Tibial artery (tissue), 4 donors: ENCODE measurements at regions of chr1 and their contacts with region 1.

Region 1: DNA sequence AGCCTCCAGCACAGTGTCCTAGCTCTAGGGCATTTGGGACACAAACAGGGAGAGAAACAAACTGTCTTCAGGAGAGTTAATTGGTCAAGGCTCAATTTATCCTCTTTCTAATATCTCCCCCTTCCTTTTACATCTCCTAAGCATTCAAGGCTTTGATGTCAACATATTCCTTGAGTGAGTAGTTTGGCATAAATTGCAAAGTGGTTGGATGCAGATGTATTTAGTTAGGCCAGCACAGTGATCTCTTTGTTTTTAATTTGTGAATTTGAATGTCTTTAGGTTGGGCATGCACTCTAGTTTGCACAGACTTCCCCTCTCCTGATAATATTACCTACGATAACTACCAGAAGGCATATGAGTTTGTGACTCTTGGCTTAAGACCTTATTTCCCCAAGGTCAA is 12.5 kb upstream of the OLFML2B start:
- DNase-seq: no peak
- H3K4me3 ChIP-seq: no peak overlapping the region
- H3K27ac ChIP-seq: no peak overlapping the region
- H3K4me1 ChIP-seq: peaks cover 0 to 19% (median 6%) of the 10 kb centered on the region in 4 donors
- H3K27me3 ChIP-seq: no peaks in the 10 kb centered on the region
- CTCF ChIP-seq: no peak

Region 2: GRCh38 chr1:161792740-161793139 is 243.4 kb before region 1 on chr1:
- intact Hi-C with region 1: loop called (anchors 2 kb)
- DNase-seq: no peak
- H3K4me3 ChIP-seq: no peak overlapping the region
- H3K27ac ChIP-seq: no peak overlapping the region
- H3K4me1 ChIP-seq: no peaks in the 10 kb centered on the region
- H3K27me3 ChIP-seq: no peaks in the 10 kb centered on the region
- CTCF ChIP-seq: peak; percentile 58 to 75

Region 3: GRCh38 chr1:161940866-161941591 is 95.1 kb before region 1 on chr1:
- intact Hi-C with region 1: no loop called
- DNase-seq: no peak
- H3K4me3 ChIP-seq: no peak overlapping the region
- H3K27ac ChIP-seq: no peak overlapping the region
- H3K4me1 ChIP-seq: peaks cover 0 to 7% (median 2%) of the 10 kb centered on the region in 4 donors
- H3K27me3 ChIP-seq: no peaks in the 10 kb centered on the region
- CTCF ChIP-seq: no peak

Region 4: DNA sequence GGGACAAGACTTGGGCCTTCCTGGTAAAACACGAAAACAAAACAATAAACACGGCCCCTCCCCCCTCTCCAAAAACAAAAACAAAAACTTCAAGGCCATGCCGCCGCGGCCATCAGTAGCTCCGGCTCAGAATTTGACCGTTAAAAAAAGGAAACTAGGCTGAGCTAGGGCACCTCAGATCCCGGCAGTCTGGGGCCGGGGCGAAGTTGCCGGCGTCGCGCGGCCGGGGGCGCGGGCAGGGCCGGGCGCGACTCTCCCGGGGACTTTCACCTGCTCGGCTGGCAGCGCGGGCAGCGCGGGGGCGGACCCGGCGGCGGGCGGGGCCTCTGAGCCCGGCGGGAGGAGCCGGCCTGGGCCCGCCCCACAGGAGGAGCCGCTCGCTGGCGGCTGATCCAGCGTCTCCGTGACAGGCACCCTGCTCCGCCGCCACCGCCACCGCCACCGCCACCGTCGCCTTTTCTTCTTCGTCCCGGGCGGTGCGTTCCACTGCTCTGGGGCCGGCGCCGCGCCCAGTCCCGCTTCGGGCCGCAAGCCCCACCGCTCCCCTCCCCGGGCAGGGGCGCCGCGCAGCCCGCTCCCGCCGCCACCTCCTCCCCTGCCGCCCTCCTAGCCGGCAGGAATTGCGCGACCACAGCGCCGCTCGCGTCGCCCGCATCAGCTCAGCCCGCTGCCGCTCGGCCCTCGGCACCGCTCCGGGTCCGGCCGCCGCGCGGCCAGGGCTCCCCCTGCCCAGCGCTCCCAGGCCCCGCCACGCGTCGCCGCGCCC is 33.3 kb after region 1 on chr1 and contains the start of gene NOS1AP:
- intact Hi-C with region 1: no loop called
- DNase-seq: peak; percentile 57 to 85
- H3K4me3 ChIP-seq: peak within 1 kb of the TSS; percentile 56 to 75
- H3K27ac ChIP-seq: peak within 1 kb of the TSS in 1 of 2 donors; percentile 18
- H3K4me1 ChIP-seq: peaks cover 0 to 27% (median 15%) of the 10 kb centered on the region in 4 donors
- H3K27me3 ChIP-seq: peaks cover 0 to 39% of the 10 kb centered on the region in 2 donors
- CTCF ChIP-seq: no peak

Region 5: GRCh38 chr1:162230096-162230495 is 193.9 kb after region 1 on chr1:
- intact Hi-C with region 1: no loop called
- DNase-seq: no peak
- H3K4me3 ChIP-seq: no peak overlapping the region
- H3K27ac ChIP-seq: no peak overlapping the region
- H3K4me1 ChIP-seq: peaks cover 0 to 11% (median 3%) of the 10 kb centered on the region in 4 donors
- H3K27me3 ChIP-seq: no peaks in the 10 kb centered on the region
- CTCF ChIP-seq: peak in 1 of 2 experiments; percentile 9

Region 6: GRCh38 chr1:162373541-162374375 is 337.6 kb after region 1 on chr1:
- intact Hi-C with region 1: no loop called
- DNase-seq: peak in 1 of 2 donors; percentile 32
- H3K4me3 ChIP-seq: no peak overlapping the region
- H3K27ac ChIP-seq: no peak overlapping the region
- H3K4me1 ChIP-seq: no peaks in the 10 kb centered on the region
- H3K27me3 ChIP-seq: no peaks in the 10 kb centered on the region
- CTCF ChIP-seq: no peak